Activated CD4-positive, alpha-beta T cell treated with anti-CD3 and anti-CD28 coated beads for 36 hours (primary cell): ENCODE measurements at regions of chr4 and their contacts with region 1.

Region 1: DNA sequence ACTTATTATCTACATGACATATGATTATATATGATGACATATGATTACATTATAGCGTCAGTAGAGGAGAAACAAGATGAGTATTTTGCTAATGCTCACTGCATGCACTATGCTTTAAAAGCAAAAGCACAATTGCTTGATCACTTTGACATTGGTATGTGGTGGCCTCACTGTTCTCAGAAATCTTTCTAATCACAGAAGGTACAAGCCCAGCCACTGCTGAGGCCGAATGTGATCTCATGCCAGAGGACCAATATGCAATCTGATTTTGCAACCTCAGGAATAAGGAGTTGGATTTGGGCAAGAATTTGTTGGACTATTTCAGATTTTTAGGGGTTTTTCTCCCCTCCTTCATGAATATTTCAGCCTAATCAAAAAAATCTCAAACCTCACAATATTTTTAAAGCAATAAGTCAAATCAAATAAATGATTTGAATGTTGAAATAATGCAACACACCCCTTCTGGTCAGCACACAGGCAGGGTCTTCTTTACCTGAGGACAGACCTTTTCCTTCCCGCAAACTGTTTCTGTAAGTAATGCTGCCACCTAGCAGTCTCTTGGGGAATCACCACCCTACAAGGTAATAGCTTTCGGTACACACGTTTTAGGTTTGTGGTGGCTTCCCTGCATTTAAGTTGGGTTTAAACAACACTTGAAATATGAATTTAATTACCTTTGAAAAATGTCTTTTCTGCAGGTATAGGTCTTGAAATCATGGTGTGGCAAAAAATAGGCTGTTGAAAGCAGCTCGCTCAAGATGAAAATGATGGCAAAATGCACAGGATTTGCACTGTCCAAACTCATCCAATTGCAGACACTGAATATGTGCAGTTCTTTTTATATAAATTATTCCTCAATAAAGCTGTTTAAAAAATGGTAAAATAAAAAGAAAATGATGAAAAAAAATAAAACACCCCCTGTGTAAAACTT is 4.8 kb upstream of the CXCL13 start:
- DNase-seq: peak; percentile 55
- ATAC-seq: peak; percentile 70
- H3K4me3 Mint-ChIP-seq: no peak overlapping the region
- H3K27ac Mint-ChIP-seq: no peak overlapping the region
- H3K4me1 Mint-ChIP-seq: peaks cover 32% of the 10 kb centered on the region
- H3K27me3 Mint-ChIP-seq: peaks cover 15% of the 10 kb centered on the region

Region 2: DNA sequence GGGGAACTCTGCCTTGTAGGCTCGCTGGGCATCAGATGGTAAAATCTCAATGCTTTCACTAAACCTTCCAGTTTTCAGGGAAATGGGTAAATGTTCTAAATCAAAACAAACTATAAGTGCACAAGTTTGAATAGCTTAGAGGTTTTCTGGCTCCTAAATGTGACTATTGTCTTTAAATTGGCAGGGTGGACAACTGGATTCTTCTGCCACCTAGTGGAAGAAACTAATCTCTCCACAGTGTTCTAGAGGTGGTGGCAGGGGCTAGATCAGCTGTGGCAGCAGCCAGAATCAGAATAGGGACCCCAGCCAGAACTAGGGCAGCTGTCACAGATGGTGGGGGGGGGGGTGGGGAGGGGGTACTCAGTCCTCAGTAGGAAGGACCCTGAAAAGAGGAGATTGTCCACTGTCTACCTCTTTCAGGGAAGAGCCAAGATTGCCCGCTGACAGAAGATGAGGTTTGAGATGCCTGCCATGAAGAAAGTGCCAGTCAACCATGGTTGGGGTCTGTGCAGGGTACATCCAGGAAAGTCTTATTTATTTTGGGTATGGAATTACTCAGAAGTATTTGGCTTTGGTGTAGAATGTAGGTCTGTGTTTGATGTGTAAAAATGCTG is 242.4 kb before region 1 on chr4:
- CTCF ChIA-PET with region 1: interaction called, 11 read pairs
- POLR2A ChIA-PET with region 1: no interaction called
- intact Hi-C with region 1: no loop called
- DNase-seq: peak; percentile 10
- ATAC-seq: peak; percentile 42
- H3K4me3 Mint-ChIP-seq: no peak overlapping the region
- H3K27ac Mint-ChIP-seq: no peak overlapping the region
- H3K4me1 Mint-ChIP-seq: no peaks in the 10 kb centered on the region
- H3K27me3 Mint-ChIP-seq: no peaks in the 10 kb centered on the region

Region 3: GRCh38 chr4:77385124-77385969 is 215.4 kb before region 1 on chr4:
- CTCF ChIA-PET with region 1: interaction called, 25 read pairs
- POLR2A ChIA-PET with region 1: no interaction called
- intact Hi-C with region 1: loop called (anchors 1 kb)
- DNase-seq: peak; percentile 77
- ATAC-seq: peak; percentile 76
- H3K4me3 Mint-ChIP-seq: no peak overlapping the region
- H3K27ac Mint-ChIP-seq: no peak overlapping the region
- H3K4me1 Mint-ChIP-seq: peaks cover 2% of the 10 kb centered on the region
- H3K27me3 Mint-ChIP-seq: no peaks in the 10 kb centered on the region

Region 4: GRCh38 chr4:77465271-77465670 is 135.5 kb before region 1 on chr4:
- CTCF ChIA-PET with region 1: interaction called, 103 read pairs
- POLR2A ChIA-PET with region 1: no interaction called
- intact Hi-C with region 1: loop called (anchors 1 kb)
- DNase-seq: peak; percentile 66
- ATAC-seq: peak; percentile 68
- H3K4me3 Mint-ChIP-seq: no peak overlapping the region
- H3K27ac Mint-ChIP-seq: no peak overlapping the region
- H3K4me1 Mint-ChIP-seq: no peaks in the 10 kb centered on the region
- H3K27me3 Mint-ChIP-seq: peaks cover 16% of the 10 kb centered on the region

Region 5: DNA sequence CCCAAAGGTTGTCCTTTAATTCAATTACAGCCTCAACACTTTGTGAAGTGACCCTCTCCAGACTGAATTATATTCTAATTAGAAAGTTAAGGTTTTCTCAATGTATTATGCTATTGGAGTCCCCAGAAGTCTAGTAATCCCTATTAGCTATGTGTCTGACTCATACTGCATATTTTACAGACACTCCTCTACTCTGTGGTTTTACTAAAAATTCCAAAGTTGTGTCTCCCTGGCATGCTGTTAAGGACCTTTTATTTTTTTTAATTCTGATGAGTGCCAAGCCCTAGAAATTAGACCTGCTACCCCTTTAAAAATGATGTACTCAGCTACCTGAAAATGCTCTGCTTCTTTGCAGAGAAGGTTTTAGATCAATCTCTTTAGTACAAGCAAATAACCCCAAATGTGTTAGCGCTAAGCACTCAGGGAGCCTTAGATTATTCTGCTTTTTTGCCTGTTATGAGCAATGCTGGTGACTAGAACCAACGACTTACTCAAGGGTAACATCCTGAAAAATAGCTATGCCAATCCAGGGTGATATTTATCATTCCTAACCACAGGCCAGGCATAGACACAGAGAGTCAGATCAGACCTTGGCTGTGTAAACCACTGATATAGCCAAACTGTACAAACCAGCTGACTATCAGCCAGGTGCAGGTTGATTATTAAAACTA is 21.2 kb before region 1 on chr4:
- CTCF ChIA-PET with region 1: interaction called, 40 read pairs
- POLR2A ChIA-PET with region 1: no interaction called
- intact Hi-C with region 1: loop called (anchors 2 kb)
- DNase-seq: no peak
- ATAC-seq: peak; percentile 63
- H3K4me3 Mint-ChIP-seq: no peak overlapping the region
- H3K27ac Mint-ChIP-seq: peak overlapping the region; percentile 70
- H3K4me1 Mint-ChIP-seq: peaks cover 39% of the 10 kb centered on the region
- H3K27me3 Mint-ChIP-seq: peaks cover 17% of the 10 kb centered on the region

Region 6: GRCh38 chr4:77618383-77619122 is 17.8 kb after region 1 on chr4:
- CTCF ChIA-PET with region 1: interaction called, 85 read pairs
- POLR2A ChIA-PET with region 1: no interaction called
- intact Hi-C with region 1: no loop called
- DNase-seq: peak; percentile 76
- ATAC-seq: peak; percentile 96
- H3K4me3 Mint-ChIP-seq: no peak overlapping the region
- H3K27ac Mint-ChIP-seq: peak overlapping the region; percentile 34
- H3K4me1 Mint-ChIP-seq: peaks cover 6% of the 10 kb centered on the region
- H3K27me3 Mint-ChIP-seq: peaks cover 14% of the 10 kb centered on the region

Region 7: DNA sequence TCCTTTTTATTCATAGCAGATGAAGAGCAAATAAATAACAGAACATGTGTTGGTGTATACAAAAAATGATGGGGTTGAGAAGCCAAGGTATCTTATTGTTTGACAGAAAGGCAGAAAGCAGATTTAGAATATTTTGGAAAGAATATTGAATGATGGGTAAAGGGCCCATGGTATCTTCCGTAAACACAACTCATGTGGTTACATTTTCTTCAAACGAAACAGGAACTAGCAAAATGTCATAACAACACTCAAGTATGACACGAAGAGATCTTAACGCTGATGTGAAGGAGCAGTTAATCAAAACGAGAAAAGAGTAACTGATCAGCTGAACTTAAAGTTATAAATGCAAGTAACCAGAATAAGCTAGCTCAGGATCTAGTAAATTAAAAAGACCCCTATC is 2002.9 kb after region 1 on chr4:
- CTCF ChIA-PET with region 1: no interaction called
- POLR2A ChIA-PET with region 1: no interaction called
- intact Hi-C with region 1: no loop called
- DNase-seq: no peak
- ATAC-seq: peak; percentile 83
- H3K4me3 Mint-ChIP-seq: no peak overlapping the region
- H3K27ac Mint-ChIP-seq: no peak overlapping the region
- H3K4me1 Mint-ChIP-seq: peaks cover 9% of the 10 kb centered on the region
- H3K27me3 Mint-ChIP-seq: no peaks in the 10 kb centered on the region